ENCODE measurements at regions of chr9 and their contacts with region 1.

Region 1: GRCh38 chr9:36560857-36561221 is 11.9 kb upstream of the MELK start:
- DNase-seq: no peak
- H3K4me3 Mint-ChIP-seq: no peak overlapping the region
- H3K27ac Mint-ChIP-seq: no peak overlapping the region
- H3K4me1 Mint-ChIP-seq: no peaks in the 10 kb centered on the region
- H3K27me3 Mint-ChIP-seq: no peaks in the 10 kb centered on the region

Region 2: DNA sequence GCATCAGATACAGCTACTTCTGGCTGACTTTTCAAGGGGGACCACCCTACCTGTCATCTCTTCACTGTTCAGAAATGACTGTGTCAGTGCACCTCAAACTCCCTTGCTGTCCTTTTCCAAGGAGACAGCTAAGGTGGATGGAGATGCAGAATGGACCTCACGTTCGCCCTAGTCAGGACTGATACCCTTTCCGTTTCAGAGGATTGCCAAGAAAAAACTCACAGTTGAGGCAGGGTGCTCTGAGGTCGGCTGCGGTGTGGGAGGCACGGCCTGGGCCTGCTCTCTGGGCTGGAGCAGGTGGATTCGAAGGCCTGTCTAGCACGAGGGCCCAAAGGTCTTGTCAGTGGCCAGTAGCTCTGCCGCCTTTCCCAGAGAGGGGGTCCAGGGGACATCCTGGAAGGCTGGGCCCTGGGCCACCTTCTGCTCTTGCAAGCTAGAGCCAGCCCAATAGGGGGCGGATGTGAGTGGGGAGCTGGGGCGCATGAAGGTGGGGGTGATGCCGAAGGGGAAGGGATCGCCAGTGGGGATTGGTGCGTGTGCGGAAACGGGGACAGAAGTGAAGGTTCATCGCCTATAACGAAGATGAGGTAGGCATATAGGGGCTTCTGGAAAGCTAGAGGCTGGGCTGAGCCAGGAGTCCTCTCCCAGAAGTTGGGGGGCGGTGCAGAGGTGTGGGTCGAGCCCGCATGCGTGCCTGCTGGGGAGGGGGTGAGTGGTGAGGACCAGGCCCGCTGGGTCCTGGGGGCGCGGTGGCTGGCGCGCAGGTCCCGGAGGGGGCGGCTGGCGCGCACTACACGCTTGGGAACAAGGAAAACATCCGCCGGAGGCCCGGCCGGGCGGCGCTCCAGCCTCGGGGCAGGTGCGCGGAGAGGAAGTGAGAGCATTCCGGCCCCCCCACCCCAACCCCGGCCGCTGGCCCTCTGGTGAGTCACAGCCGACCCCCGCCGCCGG is 804.3 kb before region 1 on chr9:
- CTCF ChIA-PET with region 1: no interaction called
- POLR2A ChIA-PET with region 1: no interaction called
- intact Hi-C with region 1: no loop called
- DNase-seq: peak; percentile 89
- H3K4me3 Mint-ChIP-seq: peak overlapping the region; percentile 96
- H3K27ac Mint-ChIP-seq: peak overlapping the region; percentile 95
- H3K4me1 Mint-ChIP-seq: peaks cover 35% of the 10 kb centered on the region
- H3K27me3 Mint-ChIP-seq: no peaks in the 10 kb centered on the region

Region 3: DNA sequence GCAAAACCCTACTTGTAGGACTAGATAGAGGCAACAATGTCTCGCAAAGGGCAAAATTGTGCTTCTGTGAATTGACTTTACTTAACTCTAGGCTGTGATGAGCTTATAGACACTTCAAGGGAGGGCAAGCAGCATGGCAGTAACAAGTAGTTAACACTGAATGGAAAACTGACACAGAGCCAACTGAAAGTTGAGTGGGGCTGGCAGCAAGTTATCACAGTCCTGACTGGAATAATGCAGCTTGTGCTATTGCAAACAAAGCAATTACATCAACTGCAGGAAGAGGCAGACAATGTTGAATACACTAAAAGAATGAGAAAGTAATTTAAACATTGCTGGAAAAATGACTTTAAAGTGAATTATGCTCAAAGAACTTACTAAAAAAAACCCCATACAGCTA is 223.0 kb before region 1 on chr9:
- CTCF ChIA-PET with region 1: no interaction called
- POLR2A ChIA-PET with region 1: no interaction called
- intact Hi-C with region 1: loop called (anchors 5 kb)
- DNase-seq: no peak
- H3K4me3 Mint-ChIP-seq: no peak overlapping the region
- H3K27ac Mint-ChIP-seq: no peak overlapping the region
- H3K4me1 Mint-ChIP-seq: peaks cover 12% of the 10 kb centered on the region
- H3K27me3 Mint-ChIP-seq: no peaks in the 10 kb centered on the region

Region 4: DNA sequence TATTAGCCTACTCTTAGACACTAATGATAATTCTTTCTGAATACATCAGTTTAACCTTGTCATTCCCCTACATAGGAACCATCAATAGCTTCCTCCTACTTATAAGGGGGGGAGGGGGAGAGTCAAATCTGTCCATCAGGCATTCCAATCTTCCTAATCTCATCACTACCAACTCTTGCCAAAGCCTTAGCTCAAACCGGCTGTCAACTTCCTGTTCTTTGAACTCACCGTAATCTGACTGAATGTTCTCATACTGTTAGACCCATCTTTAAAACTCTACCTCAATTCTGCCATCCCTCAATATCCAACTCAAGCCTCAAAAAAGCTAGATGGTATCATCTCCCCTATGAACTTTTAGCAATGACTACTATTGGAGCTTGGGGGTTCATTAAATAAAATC is 118.9 kb before region 1 on chr9:
- CTCF ChIA-PET with region 1: interaction called, 10 read pairs
- POLR2A ChIA-PET with region 1: no interaction called
- intact Hi-C with region 1: no loop called
- DNase-seq: no peak
- H3K4me3 Mint-ChIP-seq: no peak overlapping the region
- H3K27ac Mint-ChIP-seq: no peak overlapping the region
- H3K4me1 Mint-ChIP-seq: peaks cover 43% of the 10 kb centered on the region
- H3K27me3 Mint-ChIP-seq: no peaks in the 10 kb centered on the region

Region 5: DNA sequence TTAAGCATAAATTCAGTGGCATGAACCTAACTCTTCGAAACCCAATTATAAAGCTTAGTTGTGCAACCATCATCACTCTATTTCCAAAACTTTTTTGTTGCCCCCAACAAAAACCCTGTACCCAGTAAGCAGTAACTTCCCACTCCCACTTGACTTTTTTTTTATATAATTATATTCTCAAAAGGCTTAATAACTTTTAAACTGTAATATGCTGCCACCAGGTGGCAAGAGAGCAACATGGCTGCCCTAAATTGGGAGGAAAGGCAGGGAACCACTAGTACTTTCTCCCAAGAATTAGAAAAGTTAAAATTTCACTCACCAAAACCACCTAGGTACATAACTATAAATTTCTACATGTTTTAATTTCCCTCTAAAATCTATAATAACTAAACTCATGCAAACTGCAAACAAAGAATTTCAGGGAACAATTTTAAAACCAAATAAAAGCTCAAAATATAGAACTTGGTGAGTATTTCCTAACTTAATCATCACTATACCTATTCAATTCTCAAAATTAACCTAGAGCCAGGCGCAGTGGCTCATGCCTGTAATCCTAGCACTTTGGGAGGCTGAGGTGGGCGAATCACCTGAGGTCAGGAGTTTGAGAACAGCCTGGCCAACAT is 110.6 kb before region 1 on chr9:
- CTCF ChIA-PET with region 1: interaction called, 25 read pairs
- POLR2A ChIA-PET with region 1: no interaction called
- intact Hi-C with region 1: loop called (anchors 5 kb)
- DNase-seq: peak; percentile 29
- H3K4me3 Mint-ChIP-seq: no peak overlapping the region
- H3K27ac Mint-ChIP-seq: no peak overlapping the region
- H3K4me1 Mint-ChIP-seq: peaks cover 8% of the 10 kb centered on the region
- H3K27me3 Mint-ChIP-seq: no peaks in the 10 kb centered on the region

Region 6: DNA sequence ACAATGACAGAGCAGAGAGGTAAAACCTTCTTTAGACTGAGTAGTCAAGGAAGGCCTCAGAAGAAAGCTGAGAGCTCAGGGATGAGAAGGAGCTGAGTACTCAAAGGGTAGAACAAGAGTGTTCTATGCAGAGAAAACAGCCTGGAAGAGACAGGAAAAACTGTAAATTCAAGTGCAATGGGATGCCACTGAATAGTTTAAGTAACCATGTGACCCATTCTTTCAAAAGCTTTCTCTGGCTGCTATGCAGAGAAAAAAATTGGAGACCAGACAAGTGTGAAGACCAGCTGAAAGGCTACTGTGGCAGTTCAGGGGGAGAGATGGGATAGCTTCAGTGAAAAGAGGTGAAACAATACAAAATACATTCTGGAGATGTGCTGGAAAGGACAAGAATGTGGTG is 99.5 kb before region 1 on chr9:
- CTCF ChIA-PET with region 1: interaction called, 3 read pairs
- POLR2A ChIA-PET with region 1: no interaction called
- intact Hi-C with region 1: loop called (anchors 5 kb)
- DNase-seq: no peak
- H3K4me3 Mint-ChIP-seq: no peak overlapping the region
- H3K27ac Mint-ChIP-seq: no peak overlapping the region
- H3K4me1 Mint-ChIP-seq: peaks cover 48% of the 10 kb centered on the region
- H3K27me3 Mint-ChIP-seq: no peaks in the 10 kb centered on the region